ENCODE measurements at regions of chr6 and their contacts with region 1.

Region 1: DNA sequence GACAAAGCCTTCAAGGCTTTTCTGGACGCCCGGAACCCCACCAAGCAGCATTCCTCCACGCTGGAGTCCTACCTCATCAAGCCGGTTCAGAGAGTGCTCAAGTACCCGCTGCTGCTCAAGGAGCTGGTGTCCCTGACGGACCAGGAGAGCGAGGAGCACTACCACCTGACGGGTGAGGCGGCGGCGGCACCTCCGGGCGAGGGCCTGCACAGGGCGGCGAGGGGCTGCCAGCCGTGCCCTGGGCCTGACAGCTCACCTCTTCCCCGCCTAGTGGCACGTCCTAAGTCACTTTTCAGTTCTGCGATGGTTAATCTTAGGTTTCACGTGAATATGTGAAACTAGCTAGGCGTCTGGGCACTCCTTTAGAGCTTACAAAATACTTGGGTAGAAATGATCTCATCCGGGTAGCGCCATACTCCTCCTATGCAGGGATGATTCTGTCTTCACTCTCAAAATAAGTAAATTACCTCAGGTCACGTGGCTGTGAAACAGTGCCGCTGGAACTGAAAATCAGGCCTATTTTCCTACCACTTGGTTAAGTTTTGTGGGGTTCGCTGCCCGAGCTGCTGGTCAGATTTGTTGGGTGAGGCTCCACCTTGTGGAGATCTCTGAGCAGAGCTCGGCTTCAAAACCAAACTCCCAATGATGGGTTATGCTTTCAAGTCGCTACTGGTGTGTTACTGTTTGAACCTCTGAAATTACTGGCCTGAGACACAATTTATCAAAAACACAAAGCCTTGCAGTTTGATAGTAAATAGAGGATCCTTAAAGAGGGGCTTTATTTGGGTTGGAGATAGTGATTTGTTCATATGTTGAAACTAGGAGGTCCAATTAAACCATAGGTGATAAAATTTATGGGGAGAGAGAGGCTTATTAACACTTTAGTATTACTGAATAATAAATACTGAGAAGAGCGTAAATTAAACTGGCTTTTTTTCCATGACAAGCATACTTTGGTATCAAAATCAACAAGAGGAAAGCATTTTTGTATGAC is 15.5 kb upstream of the CLDN20 start:
- DNase-seq: peak; percentile 75
- H3K4me3 ChIP-seq: no peak overlapping the region
- H3K27ac ChIP-seq: no peak overlapping the region
- H3K4me1 ChIP-seq: no peaks in the 10 kb centered on the region
- H3K27me3 ChIP-seq: no peaks in the 10 kb centered on the region
- CTCF ChIP-seq: peak; percentile 71 to 74
- POLR2A ChIP-seq: no peak

Region 2: GRCh38 chr6:154868143-154868594 is 380.1 kb before region 1 on chr6:
- CTCF ChIA-PET with region 1: interaction called, 63 read pairs
- POLR2A ChIA-PET with region 1: no interaction called
- dilution Hi-C with region 1: no loop called
- intact Hi-C with region 1: loop called (anchors 5 kb)
- DNase-seq: peak; percentile 57
- H3K4me3 ChIP-seq: no peak overlapping the region
- H3K27ac ChIP-seq: no peak overlapping the region
- H3K4me1 ChIP-seq: no peaks in the 10 kb centered on the region
- H3K27me3 ChIP-seq: no peaks in the 10 kb centered on the region
- CTCF ChIP-seq: peak; percentile 53 to 54
- POLR2A ChIP-seq: no peak

Region 3: DNA sequence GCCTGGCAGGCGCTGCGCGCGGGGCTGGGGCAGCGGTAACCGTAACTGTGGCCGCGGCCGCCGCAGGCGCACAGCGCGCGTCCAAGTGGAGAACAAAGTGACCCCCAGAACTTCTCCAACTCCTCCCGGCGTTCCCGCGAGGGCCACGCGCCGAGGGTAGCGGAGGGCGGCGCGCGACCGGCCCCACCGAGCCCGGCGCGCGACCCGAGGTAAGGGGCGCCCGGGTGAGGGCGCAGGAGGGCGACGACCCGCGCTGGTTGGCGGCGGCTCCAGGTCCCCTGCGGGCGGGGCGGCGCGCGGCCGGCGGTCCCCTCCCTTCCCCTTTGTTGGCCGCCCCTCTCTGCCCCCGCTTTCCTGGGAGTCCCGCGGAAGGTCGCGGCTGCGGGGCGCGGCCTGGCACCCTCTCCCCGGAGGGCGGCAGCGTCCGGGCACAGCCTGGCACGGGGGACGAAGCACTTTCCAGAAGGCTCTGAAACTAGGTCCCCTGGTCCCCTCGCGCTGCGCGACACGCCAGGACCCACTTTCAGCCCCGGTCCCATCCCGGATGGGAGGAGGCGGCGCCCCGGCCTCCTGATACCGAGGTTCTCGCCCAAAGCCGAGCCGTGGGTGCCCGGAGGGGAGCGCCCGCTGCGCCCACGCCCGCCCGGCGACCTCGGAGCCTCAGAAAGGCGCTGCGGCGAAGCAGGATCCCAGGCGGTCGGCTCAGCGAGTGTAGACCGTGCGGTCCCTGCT is 252.9 kb before region 1 on chr6 and contains the start of gene TIAM2:
- CTCF ChIA-PET with region 1: no interaction called
- POLR2A ChIA-PET with region 1: no interaction called
- dilution Hi-C with region 1: no loop called
- intact Hi-C with region 1: loop called (anchors 5 kb)
- DNase-seq: no peak
- H3K4me3 ChIP-seq: peak within 1 kb of the TSS; percentile 77 to 96 (median 86)
- H3K27ac ChIP-seq: no peak within 1 kb of the TSS
- H3K4me1 ChIP-seq: peaks cover 6% of the 10 kb centered on the region
- H3K27me3 ChIP-seq: no peaks in the 10 kb centered on the region
- CTCF ChIP-seq: no peak
- POLR2A ChIP-seq: no peak
- total RNA-seq, gene TIAM2: 13.5 and 18.5 TPM in 2 replicates

Region 4: DNA sequence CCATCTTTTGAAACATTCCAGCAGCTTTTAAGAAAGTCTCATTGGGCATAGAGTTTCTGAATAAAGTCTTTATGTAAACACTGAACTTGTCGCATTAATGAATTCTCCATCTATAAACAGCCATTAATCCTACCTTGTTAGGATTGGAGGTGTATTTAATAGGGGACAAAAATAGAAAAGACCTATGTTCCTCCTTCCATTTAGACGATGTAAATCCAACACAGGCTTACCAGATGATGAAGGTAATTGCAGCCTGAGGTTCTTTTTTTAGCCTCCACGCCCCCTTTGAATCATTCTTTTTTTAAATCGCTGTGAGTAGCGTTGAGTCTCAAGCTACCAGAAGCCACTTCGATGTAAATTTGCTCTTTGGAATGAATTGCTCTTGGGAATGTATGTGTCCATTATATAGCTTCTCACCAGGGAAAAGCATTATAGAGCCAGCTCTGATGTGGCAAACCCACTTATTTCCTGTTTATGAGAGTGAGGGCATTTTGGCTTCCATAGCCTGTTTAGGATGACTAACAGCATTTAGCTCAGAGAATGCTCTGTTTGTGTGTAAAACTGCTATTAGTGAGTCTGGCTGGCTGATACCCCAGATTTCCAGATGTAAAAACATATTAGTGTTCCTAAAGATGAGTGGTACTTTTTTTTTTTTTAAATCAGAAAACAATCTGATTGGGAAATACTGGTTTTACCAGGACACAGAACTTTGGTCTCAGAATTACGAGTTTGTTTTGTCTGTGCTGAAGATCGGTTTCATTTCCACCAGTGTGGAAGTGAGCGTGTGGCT is 59.4 kb before region 1 on chr6:
- CTCF ChIA-PET with region 1: interaction called, 35 read pairs
- POLR2A ChIA-PET with region 1: no interaction called
- dilution Hi-C with region 1: no loop called
- intact Hi-C with region 1: no loop called
- DNase-seq: peak; percentile 99
- H3K4me3 ChIP-seq: peak overlapping the region in 1 of 3 experiments; percentile 37
- H3K27ac ChIP-seq: peak overlapping the region; percentile 90
- H3K4me1 ChIP-seq: peaks cover 51% of the 10 kb centered on the region
- H3K27me3 ChIP-seq: no peaks in the 10 kb centered on the region
- CTCF ChIP-seq: no peak
- POLR2A ChIP-seq: peak; percentile 50

Region 5: DNA sequence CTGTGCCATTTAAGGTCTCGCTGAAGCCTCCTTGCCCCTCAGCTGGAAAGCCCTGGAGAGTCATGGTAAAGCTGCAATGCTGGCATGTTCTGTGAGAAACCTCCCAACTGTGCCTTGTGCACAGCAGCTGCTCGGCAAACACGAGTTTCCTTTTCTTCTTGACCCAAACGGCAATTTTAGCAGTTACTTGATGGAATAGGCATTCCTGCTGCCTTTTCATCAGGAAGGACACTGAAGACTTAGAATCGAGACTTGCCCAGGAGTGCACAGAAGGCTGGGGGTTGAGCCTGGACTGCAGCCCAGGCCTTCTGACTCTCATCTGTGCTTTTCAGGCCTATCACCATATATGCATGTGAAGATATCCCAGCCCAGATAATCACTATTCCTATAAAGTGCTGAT is 13.2 kb before region 1 on chr6:
- CTCF ChIA-PET with region 1: interaction called, 18 read pairs
- POLR2A ChIA-PET with region 1: no interaction called
- dilution Hi-C with region 1: no loop called
- intact Hi-C with region 1: no loop called
- DNase-seq: no peak
- H3K4me3 ChIP-seq: no peak overlapping the region
- H3K27ac ChIP-seq: no peak overlapping the region
- H3K4me1 ChIP-seq: no peaks in the 10 kb centered on the region
- H3K27me3 ChIP-seq: no peaks in the 10 kb centered on the region
- CTCF ChIP-seq: no peak
- POLR2A ChIP-seq: no peak

Region 6: DNA sequence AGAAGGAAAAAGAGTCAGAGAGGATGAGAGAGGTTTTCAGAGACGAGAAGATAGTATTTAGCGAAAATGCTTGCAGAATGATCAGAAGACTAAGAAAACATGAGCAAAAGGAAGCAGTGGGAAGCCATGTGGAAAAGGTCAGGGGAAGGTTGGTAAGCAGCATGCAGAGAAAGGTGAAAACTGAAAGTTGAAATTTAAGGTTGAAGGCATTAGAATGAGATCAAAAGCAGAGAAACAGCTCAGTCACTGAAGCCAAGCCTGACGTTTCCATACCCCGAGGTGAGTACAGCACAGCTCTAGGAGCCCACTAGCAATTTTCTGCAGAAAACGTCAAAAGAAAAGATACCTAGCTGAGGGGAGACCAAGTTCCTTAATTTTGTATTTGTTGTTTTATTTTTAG is 85.1 kb after region 1 on chr6:
- CTCF ChIA-PET with region 1: no interaction called
- POLR2A ChIA-PET with region 1: no interaction called
- dilution Hi-C with region 1: no loop called
- intact Hi-C with region 1: no loop called
- DNase-seq: no peak
- H3K4me3 ChIP-seq: no peak overlapping the region
- H3K27ac ChIP-seq: no peak overlapping the region
- H3K4me1 ChIP-seq: peaks cover 3% of the 10 kb centered on the region
- H3K27me3 ChIP-seq: no peaks in the 10 kb centered on the region
- CTCF ChIP-seq: no peak
- POLR2A ChIP-seq: no peak

Region 7: DNA sequence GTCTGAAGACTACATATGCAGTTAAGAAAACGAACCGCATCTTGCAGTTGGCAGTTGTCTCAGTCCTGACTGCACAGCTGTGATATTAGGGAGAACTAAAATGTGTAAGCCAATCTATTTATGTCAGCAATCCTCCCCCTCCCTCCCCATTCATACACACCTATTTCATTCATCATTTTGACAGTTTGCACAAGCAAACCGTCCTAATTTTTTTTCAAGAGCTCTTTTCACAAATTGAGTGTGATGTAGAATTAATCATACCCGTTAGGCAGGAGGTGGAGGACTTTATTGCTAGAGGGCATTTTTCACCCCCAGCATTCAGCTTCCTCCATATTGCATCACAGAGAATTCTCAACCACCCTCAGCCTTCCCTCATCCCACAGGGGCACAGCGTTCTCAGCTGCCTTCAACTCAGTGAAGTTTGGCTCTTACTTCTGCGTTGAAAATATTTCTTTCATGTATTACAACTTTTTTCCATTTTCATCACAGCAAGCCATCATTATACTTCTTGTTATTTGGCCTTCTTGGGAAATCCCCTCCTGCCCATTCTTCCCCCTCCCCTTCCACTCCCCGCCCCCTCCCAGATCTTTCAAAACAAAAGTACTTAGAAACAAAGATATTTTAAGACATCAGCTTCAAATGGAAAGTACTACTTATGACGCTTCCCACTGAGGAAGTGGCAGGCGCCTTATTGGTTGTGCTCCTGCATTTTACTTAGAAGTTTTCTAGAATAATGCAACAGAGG is 169.9 kb after region 1 on chr6:
- CTCF ChIA-PET with region 1: no interaction called
- POLR2A ChIA-PET with region 1: no interaction called
- dilution Hi-C with region 1: no loop called
- intact Hi-C with region 1: no loop called
- DNase-seq: peak; percentile 91
- H3K4me3 ChIP-seq: no peak overlapping the region
- H3K27ac ChIP-seq: peak overlapping the region; percentile 15
- H3K4me1 ChIP-seq: peaks cover 4% of the 10 kb centered on the region
- H3K27me3 ChIP-seq: no peaks in the 10 kb centered on the region
- CTCF ChIP-seq: no peak
- POLR2A ChIP-seq: no peak

Measured in endothelial cell of umbilical vein (primary cell).